Sigmoid colon (tissue), 7 donors: ENCODE measurements at regions of chr12 and their contacts with region 1.

Region 1: GRCh38 chr12:93397412-93397811 is 19.7 kb downstream of the NUDT4 start:
- DNase-seq: no peak
- H3K4me3 ChIP-seq: no peak overlapping the region
- H3K27ac ChIP-seq: peak overlapping the region in 1 of 4 donors; percentile 25
- H3K4me1 ChIP-seq: no peaks in the 10 kb centered on the region
- H3K27me3 ChIP-seq: no peaks in the 10 kb centered on the region
- CTCF ChIP-seq: no peak
- EP300 ChIP-seq: no peak
- POLR2A ChIP-seq: no peak

Region 2: GRCh38 chr12:92784795-92785562 is 612.4 kb before region 1 on chr12:
- intact Hi-C with region 1: loop called (anchors 5 kb)
- DNase-seq: no peak
- H3K4me3 ChIP-seq: no peak overlapping the region
- H3K27ac ChIP-seq: no peak overlapping the region
- H3K4me1 ChIP-seq: peaks cover 0 to 8% (median 0%) of the 10 kb centered on the region in 4 donors
- H3K27me3 ChIP-seq: no peaks in the 10 kb centered on the region
- CTCF ChIP-seq: peak in 3 of 4 experiments; percentile 28 to 53 (median 35)
- EP300 ChIP-seq: no peak
- POLR2A ChIP-seq: no peak

Region 3: DNA sequence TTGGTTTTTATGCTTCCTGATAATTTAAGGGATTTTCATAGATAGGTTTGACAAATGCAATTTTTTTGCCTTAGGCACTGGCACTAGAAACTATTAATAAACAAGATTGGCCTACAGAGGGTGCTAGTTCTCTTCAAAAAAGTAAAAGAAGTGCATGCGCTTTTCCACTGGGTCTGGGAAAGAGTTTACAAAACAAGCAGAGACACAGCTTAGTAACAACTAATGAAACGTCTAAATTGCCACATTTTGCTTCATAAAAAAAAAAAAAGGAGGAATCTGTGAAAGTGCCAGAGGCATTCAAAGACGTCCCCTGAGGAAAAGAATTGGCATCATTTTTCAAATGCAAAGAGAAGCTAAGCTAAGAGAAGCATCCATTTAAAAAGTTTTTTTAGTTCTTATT is 410.1 kb before region 1 on chr12:
- intact Hi-C with region 1: loop called (anchors 2 kb)
- DNase-seq: no peak
- H3K4me3 ChIP-seq: peak overlapping the region in 1 of 4 donors; percentile 13
- H3K27ac ChIP-seq: peak overlapping the region in 1 of 4 donors; percentile 6
- H3K4me1 ChIP-seq: peaks cover 0 to 7% (median 3%) of the 10 kb centered on the region in 4 donors
- H3K27me3 ChIP-seq: no peaks in the 10 kb centered on the region
- CTCF ChIP-seq: peak; percentile 38 to 73 (median 62)
- EP300 ChIP-seq: no peak
- POLR2A ChIP-seq: no peak

Region 4: DNA sequence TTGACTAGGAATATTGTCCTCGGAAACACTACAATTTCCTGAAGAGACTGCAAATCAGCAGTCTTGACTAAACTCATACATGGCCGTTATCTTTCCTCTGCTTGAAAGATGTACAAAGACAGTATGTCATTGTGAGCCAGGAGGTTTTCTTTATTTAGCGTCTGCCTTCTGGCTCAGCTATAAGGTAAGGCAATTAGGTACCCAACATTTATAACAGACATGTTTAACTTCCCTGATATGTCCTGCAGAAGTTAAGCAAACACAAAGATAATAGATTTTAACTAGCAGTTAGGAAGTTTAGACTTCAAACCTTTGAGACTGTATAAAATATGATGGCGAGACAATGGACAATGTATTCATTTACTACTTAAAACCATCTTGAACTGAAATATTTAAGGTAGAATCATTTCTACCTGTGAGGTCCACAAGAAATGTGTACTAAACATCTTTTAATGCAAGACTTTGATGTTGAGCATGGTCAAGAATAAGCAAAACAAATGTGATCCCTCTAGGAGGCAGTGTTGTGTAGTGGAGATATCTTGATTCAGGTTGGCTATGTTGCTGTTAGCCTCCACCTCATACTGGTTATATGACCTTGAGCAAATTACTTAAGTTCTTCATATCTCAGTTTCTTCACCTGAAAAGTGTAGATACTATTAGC is 372.1 kb before region 1 on chr12:
- intact Hi-C with region 1: loop called (anchors 5 kb)
- DNase-seq: no peak
- H3K4me3 ChIP-seq: no peak overlapping the region
- H3K27ac ChIP-seq: no peak overlapping the region
- H3K4me1 ChIP-seq: no peaks in the 10 kb centered on the region
- H3K27me3 ChIP-seq: no peaks in the 10 kb centered on the region
- CTCF ChIP-seq: peak in 3 of 4 experiments; percentile 45 to 51 (median 46)
- EP300 ChIP-seq: no peak
- POLR2A ChIP-seq: no peak

Region 5: DNA sequence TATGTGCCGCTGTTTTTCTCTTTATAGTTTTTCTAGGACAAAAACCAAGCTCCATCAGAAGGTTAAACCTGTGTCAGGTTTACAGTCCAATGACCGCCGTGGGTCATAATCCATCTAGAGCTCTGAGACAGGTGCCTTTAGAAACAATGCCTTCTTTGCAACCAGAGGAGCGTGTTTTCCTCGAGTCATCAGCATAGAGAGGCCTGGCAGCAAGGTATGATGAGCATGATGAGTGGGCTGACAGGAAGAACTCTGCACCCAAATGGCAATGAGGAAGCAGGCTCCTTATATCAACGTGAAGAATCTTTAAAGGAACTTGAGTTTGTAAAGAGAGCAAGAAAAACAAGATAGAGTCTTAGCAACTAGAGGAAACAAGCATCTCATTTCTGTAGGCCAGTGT is 80.2 kb before region 1 on chr12:
- intact Hi-C with region 1: no loop called
- DNase-seq: no peak
- H3K4me3 ChIP-seq: no peak overlapping the region
- H3K27ac ChIP-seq: no peak overlapping the region
- H3K4me1 ChIP-seq: peaks cover 0 to 7% (median 3%) of the 10 kb centered on the region in 4 donors
- H3K27me3 ChIP-seq: no peaks in the 10 kb centered on the region
- CTCF ChIP-seq: no peak
- EP300 ChIP-seq: no peak
- POLR2A ChIP-seq: no peak